MCF 10A (cell line): ENCODE measurements at regions of chr12 and their contacts with region 1.

Region 1: DNA sequence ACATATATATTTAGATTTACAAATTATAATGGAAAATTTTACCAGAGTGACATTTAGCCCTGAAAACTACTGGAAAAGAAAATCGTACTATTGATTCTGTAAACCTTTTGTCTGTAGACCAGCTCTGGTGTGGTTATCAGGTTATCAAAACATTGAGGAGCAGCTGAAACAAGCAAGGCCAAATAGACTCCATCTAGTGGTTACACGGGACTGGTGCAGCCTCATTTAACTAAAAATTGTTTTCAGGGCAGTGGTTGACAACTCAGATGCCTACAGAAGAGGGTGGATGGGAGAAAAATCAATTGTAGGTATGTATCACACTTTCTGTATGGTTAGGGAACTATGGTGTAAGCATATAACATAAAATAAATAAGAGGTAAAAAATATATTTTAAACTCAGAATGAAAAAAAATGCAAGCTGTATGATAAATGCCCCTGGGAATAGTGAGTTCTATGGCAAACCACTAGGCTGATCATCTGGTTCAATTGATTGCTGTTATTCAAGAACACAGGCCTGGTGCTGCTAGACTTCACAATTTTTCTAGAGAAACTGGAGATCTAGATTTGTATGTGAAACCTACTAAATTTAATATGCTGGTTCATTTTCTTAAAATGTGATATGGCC is 51.2 kb downstream of the ACSS3 start:
- DNase-seq: peak; percentile 56
- H3K4me3 Mint-ChIP-seq: no peak overlapping the region
- H3K27ac Mint-ChIP-seq: no peak overlapping the region
- H3K4me1 Mint-ChIP-seq: no peaks in the 10 kb centered on the region
- H3K27me3 Mint-ChIP-seq: no peaks in the 10 kb centered on the region
- CTCF ChIP-seq: peak; percentile 68

Region 2: DNA sequence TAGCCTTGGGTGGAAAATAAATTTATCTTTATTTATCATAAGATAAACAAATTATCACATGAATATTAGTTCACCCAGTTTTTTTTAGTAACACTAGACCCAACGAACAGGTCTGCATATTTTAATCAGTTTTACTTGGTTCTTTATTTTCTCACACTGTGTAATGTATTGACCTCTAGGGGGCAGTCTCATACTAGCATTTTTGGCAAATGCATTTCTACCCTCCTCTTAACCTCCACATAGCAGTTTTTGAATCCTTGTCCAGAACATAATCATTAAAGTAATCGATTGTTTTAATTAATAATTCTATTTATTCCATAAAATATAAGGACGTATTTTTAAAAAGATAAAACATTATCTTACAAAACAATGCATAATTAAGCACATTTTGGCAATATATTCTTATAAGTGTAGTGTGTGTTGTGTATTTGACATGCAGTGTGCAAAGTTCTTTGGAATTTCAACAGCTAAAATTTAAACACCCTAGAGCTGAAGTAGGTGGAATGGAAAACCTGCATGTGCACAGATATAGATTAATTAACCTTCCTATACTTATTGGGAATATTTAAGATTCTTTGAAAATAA is 716.6 kb before region 1 on chr12:
- CTCF ChIA-PET with region 1: interaction called, 9 read pairs
- POLR2A ChIA-PET with region 1: no interaction called
- intact Hi-C with region 1: loop called (anchors 1 kb)
- DNase-seq: peak; percentile 66
- H3K4me3 Mint-ChIP-seq: no peak overlapping the region
- H3K27ac Mint-ChIP-seq: no peak overlapping the region
- H3K4me1 Mint-ChIP-seq: no peaks in the 10 kb centered on the region
- H3K27me3 Mint-ChIP-seq: peaks cover 67% of the 10 kb centered on the region
- CTCF ChIP-seq: peak; percentile 66

Region 3: DNA sequence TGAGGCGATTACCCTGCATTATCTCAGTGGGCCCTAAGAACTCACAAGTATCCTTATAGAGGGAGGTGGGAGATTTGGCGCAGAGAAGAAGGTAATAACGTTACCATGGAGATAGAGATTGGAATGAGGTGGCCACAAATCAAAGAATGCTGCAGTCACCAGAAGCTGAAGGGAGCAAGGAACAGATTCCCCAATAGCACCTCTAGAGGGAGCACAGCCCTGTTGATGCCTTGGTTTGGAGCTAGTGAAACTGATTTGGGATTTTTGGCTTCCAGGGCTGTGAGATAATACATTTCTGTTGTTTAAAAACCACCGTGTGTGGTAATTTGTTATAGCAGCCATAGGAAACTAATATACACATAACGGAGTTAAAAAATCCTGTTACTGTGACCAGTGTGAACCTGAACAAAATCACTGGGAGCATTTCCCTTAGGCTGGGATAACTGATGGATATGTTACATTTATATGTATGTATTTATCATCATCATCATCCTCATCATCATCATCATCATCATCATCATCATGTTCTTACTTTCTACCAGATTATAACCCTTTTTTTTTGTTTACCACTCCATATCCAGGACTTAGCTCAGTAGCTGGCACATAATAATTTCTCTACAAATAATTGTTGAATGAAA is 291.6 kb before region 1 on chr12:
- CTCF ChIA-PET with region 1: no interaction called
- POLR2A ChIA-PET with region 1: no interaction called
- intact Hi-C with region 1: loop called (anchors 2 kb)
- DNase-seq: peak; percentile 61
- H3K4me3 Mint-ChIP-seq: no peak overlapping the region
- H3K27ac Mint-ChIP-seq: no peak overlapping the region
- H3K4me1 Mint-ChIP-seq: no peaks in the 10 kb centered on the region
- H3K27me3 Mint-ChIP-seq: peaks cover 60% of the 10 kb centered on the region
- CTCF ChIP-seq: peak; percentile 73

Region 4: DNA sequence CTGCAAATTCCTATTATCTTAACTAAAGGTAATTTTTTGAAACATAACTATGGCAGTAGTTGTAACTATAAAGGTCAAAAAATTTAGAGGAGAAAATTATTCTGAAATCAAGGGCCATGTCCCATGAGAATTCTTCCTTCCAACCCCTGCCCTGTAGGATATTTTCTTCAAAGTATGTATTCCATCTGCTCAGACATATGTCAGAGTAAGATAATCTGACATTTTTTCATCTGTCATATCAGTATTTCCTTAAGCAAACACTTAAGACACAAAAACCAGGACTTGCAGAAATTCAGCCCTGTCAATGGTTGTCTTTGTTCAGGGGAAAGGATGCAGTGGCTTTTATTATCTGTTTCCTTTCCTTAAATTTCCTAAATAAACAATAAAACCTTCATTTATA is 14.8 kb before region 1 on chr12:
- CTCF ChIA-PET with region 1: no interaction called
- POLR2A ChIA-PET with region 1: no interaction called
- intact Hi-C with region 1: no loop called
- DNase-seq: no peak
- H3K4me3 Mint-ChIP-seq: no peak overlapping the region
- H3K27ac Mint-ChIP-seq: no peak overlapping the region
- H3K4me1 Mint-ChIP-seq: no peaks in the 10 kb centered on the region
- H3K27me3 Mint-ChIP-seq: peaks cover 8% of the 10 kb centered on the region
- CTCF ChIP-seq: no peak

Region 5: DNA sequence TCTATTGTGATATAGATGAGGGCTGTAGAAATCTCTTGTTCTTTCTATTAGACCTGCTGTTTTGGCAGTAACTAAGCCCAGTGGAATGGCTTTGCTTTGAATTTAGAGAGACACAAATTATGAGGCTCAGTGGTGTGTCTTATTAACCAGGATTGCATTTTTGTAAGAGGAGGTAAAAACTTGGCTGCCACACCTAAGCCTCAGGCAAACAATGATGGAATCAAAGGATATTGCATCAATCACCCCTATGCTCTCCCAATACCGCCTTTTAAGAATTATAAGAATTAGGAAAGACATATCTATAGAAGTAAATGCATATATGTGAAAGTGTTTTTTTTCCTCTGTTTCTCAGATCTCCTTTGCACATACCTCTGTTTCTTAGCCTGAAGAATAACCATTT is 12.2 kb after region 1 on chr12:
- CTCF ChIA-PET with region 1: interaction called, 12 read pairs
- POLR2A ChIA-PET with region 1: no interaction called
- intact Hi-C with region 1: no loop called
- DNase-seq: peak; percentile 24
- H3K4me3 Mint-ChIP-seq: no peak overlapping the region
- H3K27ac Mint-ChIP-seq: no peak overlapping the region
- H3K4me1 Mint-ChIP-seq: peaks cover 5% of the 10 kb centered on the region
- H3K27me3 Mint-ChIP-seq: peaks cover 12% of the 10 kb centered on the region
- CTCF ChIP-seq: no peak